ENCODE measurements at regions of chr10 and their contacts with region 1.

Region 1: DNA sequence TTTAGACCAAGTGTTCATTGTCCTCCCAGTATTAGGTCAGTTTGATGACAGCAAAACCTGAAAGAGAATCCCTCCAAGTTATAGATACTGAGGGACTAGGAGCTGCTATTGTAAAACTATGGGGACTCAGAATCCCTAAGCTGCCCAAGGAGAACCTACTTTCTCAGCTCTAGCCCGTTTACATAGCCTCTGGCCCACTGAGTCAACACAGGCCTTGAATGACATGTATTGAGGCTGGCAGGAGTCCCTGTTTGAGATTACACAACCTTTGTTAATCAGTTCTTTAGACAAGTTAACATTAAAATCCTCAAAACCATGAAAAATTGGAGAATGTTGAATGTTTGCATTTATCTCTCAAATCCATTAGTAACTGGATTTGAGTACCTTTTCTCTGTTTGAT is 1079.0 kb downstream of the KCNMA1 start:
- DNase-seq: no peak
- ATAC-seq: peak; percentile 20 to 51

Region 2: DNA sequence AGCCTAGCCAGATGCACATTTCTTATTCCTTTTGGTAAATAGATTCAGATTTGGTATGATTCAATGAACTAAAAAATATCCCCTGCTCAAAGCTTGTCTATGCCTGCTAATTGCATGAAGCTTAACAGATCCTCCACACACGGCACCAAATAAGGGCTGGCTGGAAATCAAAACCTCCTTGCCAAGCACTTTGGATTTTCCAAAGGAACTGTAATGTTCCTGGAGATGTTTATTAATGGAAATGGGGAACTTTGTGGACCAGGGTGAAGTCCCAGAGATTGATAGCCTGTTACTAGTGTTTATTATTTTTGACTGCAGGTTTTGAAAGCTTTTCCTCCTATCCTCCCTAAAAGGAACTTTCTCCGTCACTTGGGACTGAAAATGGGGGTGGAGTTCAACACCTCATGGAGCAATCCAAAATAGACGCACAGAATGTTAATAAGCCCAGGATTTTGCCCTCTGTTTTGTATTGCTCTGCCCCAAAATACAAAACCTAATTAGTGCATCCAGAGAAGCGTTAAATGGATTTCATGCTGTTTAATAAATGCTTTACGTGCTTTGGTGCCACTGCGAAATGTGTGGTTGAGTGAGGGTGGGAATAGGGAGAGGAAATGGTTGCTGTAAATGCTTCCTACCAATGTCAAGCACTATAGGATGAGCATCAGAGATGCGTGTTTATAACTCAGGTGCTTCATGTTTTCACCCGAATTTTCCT is 99.4 kb before region 1 on chr10:
- intact Hi-C with region 1: no loop called
- DNase-seq: no peak
- ATAC-seq: peak in 1 of 2 donors; percentile 53

Region 3: GRCh38 chr10:76902949-76903348 is 344.4 kb after region 1 on chr10:
- intact Hi-C with region 1: loop called in 1 of 2 experiments (anchors 10 kb)
- DNase-seq: peak; percentile 69
- ATAC-seq: peak; percentile 84 to 91